ENCODE measurements at regions of chr19 and their contacts with region 1.

Region 1: DNA sequence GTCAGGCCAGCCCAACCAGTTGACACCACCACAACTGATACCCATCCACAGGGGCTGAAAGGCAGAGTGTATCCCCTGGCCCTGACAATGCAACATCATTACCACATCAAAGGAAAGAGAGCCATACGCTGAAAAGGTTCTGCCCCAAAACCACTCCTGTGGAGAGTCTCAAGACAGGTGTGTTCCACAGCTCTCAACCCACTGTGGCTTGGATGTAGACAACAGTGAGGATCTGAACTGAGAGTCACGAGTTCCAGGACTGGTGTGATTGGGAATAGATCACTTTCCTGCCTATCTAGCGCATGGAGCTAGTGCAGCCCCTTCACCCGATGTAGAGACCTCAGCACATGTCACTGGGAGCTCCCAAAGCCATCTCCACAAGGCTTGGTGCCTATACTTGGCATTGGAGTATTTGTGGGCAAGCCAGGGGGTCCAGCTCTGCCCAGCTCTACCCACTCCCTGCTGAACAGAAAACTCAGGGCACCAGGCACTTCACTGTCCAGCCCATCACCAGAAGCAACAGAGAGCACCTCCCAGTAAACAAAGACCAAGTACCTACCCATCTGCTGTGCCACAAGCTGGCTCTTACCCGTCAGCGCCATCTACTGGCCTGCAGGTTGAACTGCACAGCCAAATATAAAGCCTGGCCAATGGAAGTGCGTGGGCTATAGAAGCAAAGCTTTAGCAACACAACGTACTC is 579.5 kb downstream of the UQCRFS1 start:
- DNase-seq: peak in 8 of 9 experiments; percentile 7 to 75 (median 44)
- ATAC-seq: peak; percentile 63
- H3K4me3 ChIP-seq: no peak overlapping the region
- H3K4me3 Mint-ChIP-seq: no peak overlapping the region
- H3K27ac ChIP-seq: peak overlapping the region in 1 of 2 experiments; percentile 26
- H3K27ac Mint-ChIP-seq: no peak overlapping the region
- H3K4me1 ChIP-seq: peaks cover 12% of the 10 kb centered on the region
- H3K4me1 Mint-ChIP-seq: peaks cover 21% of the 10 kb centered on the region
- H3K27me3 ChIP-seq: no peaks in the 10 kb centered on the region
- H3K27me3 Mint-ChIP-seq: no peaks in the 10 kb centered on the region
- CTCF ChIP-seq: peak; percentile 73

Region 2: GRCh38 chr19:28242297-28242927 is 391.1 kb before region 1 on chr19:
- CTCF ChIA-PET with region 1: no interaction called
- POLR2A ChIA-PET with region 1: no interaction called
- intact Hi-C with region 1: loop called in 1 of 2 experiments (anchors 5 kb)
- DNase-seq: peak in 3 of 9 experiments; percentile 2 to 43 (median 29)
- ATAC-seq: no peak
- H3K4me3 ChIP-seq: no peak overlapping the region
- H3K4me3 Mint-ChIP-seq: no peak overlapping the region
- H3K27ac ChIP-seq: no peak overlapping the region
- H3K27ac Mint-ChIP-seq: no peak overlapping the region
- H3K4me1 ChIP-seq: no peaks in the 10 kb centered on the region
- H3K4me1 Mint-ChIP-seq: no peaks in the 10 kb centered on the region
- H3K27me3 ChIP-seq: no peaks in the 10 kb centered on the region
- H3K27me3 Mint-ChIP-seq: no peaks in the 10 kb centered on the region
- CTCF ChIP-seq: peak; percentile 45

Region 3: DNA sequence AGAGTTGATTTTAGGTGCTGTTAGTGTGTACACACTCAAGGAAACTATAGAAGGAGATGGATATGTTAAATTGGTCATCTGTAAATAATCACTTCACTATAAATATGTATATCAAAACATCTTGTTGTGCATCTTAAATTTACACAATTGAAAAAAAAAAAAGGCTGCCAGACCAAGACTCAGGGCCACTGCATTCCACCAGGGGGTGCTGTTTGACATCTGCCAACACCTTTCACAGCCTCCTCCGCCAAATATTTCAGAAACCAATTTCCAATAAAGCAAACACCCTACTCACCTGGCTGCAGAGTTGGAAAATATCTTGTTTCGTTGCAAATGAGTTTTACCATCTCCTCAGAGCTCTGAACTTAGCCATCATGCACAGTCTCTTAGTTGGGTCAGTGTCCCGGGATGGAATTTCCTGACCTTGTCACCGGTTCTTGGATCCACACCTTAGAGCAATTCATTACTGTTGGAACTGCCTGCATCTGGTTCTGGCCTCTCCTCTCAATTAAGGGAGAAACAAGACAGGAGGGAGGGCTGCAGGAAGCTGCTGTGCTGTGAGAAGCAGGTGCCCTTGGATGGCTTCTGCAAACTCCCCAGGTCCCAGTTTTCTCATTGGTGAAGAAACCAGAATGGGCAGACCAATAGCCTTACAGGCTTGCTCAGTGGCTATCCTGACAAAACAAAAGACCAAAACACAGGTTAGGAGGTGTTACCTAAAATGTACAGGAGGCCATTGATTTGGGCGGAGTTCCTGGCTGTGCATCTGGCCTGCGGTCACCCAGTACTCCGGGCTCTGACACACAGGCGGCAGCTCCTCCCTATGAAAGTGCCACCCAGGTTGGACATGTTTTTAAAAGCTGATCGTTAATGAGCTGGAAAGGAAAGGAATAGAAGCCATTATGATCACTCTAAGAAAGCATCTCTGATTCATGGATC is 167.1 kb before region 1 on chr19:
- CTCF ChIA-PET with region 1: interaction called, 32 read pairs
- POLR2A ChIA-PET with region 1: interaction called, 6 read pairs
- intact Hi-C with region 1: loop called in 1 of 2 experiments (anchors 1 kb)
- DNase-seq: peak; percentile 16 to 79 (median 70)
- ATAC-seq: peak; percentile 36
- H3K4me3 ChIP-seq: no peak overlapping the region
- H3K4me3 Mint-ChIP-seq: no peak overlapping the region
- H3K27ac ChIP-seq: no peak overlapping the region
- H3K27ac Mint-ChIP-seq: no peak overlapping the region
- H3K4me1 ChIP-seq: peaks cover 15% of the 10 kb centered on the region
- H3K4me1 Mint-ChIP-seq: peaks cover 38% of the 10 kb centered on the region
- H3K27me3 ChIP-seq: no peaks in the 10 kb centered on the region
- H3K27me3 Mint-ChIP-seq: peaks cover 2% of the 10 kb centered on the region
- CTCF ChIP-seq: peak; percentile 71

Region 4: GRCh38 chr19:28472843-28473242 is 160.6 kb before region 1 on chr19:
- CTCF ChIA-PET with region 1: interaction called, 32 read pairs
- POLR2A ChIA-PET with region 1: interaction called, 6 read pairs
- intact Hi-C with region 1: no loop called
- DNase-seq: no peak
- ATAC-seq: no peak
- H3K4me3 ChIP-seq: no peak overlapping the region
- H3K4me3 Mint-ChIP-seq: no peak overlapping the region
- H3K27ac ChIP-seq: no peak overlapping the region
- H3K27ac Mint-ChIP-seq: no peak overlapping the region
- H3K4me1 ChIP-seq: peaks cover 15% of the 10 kb centered on the region
- H3K4me1 Mint-ChIP-seq: peaks cover 27% of the 10 kb centered on the region
- H3K27me3 ChIP-seq: no peaks in the 10 kb centered on the region
- H3K27me3 Mint-ChIP-seq: no peaks in the 10 kb centered on the region
- CTCF ChIP-seq: no peak

Region 5: GRCh38 chr19:28535352-28535775 is 98.1 kb before region 1 on chr19:
- CTCF ChIA-PET with region 1: no interaction called
- POLR2A ChIA-PET with region 1: no interaction called
- intact Hi-C with region 1: no loop called
- DNase-seq: no peak
- ATAC-seq: no peak
- H3K4me3 ChIP-seq: no peak overlapping the region
- H3K4me3 Mint-ChIP-seq: no peak overlapping the region
- H3K27ac ChIP-seq: no peak overlapping the region
- H3K27ac Mint-ChIP-seq: no peak overlapping the region
- H3K4me1 ChIP-seq: no peaks in the 10 kb centered on the region
- H3K4me1 Mint-ChIP-seq: no peaks in the 10 kb centered on the region
- H3K27me3 ChIP-seq: no peaks in the 10 kb centered on the region
- H3K27me3 Mint-ChIP-seq: no peaks in the 10 kb centered on the region
- CTCF ChIP-seq: no peak

Region 6: GRCh38 chr19:28619816-28620429 is 13.5 kb before region 1 on chr19:
- CTCF ChIA-PET with region 1: interaction called, 17 read pairs
- POLR2A ChIA-PET with region 1: interaction called, 3 read pairs
- intact Hi-C with region 1: no loop called
- DNase-seq: no peak
- ATAC-seq: no peak
- H3K4me3 ChIP-seq: no peak overlapping the region
- H3K4me3 Mint-ChIP-seq: no peak overlapping the region
- H3K27ac ChIP-seq: no peak overlapping the region
- H3K27ac Mint-ChIP-seq: no peak overlapping the region
- H3K4me1 ChIP-seq: no peaks in the 10 kb centered on the region
- H3K4me1 Mint-ChIP-seq: no peaks in the 10 kb centered on the region
- H3K27me3 ChIP-seq: no peaks in the 10 kb centered on the region
- H3K27me3 Mint-ChIP-seq: no peaks in the 10 kb centered on the region
- CTCF ChIP-seq: no peak

Region 7: DNA sequence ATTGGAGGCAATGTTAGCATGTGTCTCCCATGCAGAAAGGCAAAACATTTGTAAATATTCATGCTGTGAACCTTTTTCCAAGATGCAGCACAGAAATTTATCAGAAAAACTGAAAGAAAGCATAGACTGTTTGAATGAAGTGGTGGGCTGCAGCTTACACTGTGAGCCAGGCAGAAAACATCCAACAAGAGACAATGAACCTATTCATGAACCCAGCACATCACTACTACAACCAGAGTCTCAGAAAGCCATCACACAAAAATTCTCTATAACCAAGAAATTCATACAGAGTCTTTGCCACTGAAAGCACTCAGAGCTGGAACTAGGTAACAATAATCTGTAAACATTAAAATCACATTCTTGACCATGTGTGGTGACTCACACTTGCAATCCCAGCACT is 130.6 kb after region 1 on chr19:
- CTCF ChIA-PET with region 1: no interaction called
- POLR2A ChIA-PET with region 1: no interaction called
- intact Hi-C with region 1: no loop called
- DNase-seq: no peak
- ATAC-seq: no peak
- H3K4me3 ChIP-seq: no peak overlapping the region
- H3K4me3 Mint-ChIP-seq: no peak overlapping the region
- H3K27ac ChIP-seq: no peak overlapping the region
- H3K27ac Mint-ChIP-seq: no peak overlapping the region
- H3K4me1 ChIP-seq: no peaks in the 10 kb centered on the region
- H3K4me1 Mint-ChIP-seq: no peaks in the 10 kb centered on the region
- H3K27me3 ChIP-seq: no peaks in the 10 kb centered on the region
- H3K27me3 Mint-ChIP-seq: no peaks in the 10 kb centered on the region
- CTCF ChIP-seq: no peak

Measured in CD8-positive, alpha-beta T cell (primary cell).